Endothelial cell of umbilical vein (primary cell): ENCODE measurements at regions of chr7 and their contacts with region 1.

Region 1: DNA sequence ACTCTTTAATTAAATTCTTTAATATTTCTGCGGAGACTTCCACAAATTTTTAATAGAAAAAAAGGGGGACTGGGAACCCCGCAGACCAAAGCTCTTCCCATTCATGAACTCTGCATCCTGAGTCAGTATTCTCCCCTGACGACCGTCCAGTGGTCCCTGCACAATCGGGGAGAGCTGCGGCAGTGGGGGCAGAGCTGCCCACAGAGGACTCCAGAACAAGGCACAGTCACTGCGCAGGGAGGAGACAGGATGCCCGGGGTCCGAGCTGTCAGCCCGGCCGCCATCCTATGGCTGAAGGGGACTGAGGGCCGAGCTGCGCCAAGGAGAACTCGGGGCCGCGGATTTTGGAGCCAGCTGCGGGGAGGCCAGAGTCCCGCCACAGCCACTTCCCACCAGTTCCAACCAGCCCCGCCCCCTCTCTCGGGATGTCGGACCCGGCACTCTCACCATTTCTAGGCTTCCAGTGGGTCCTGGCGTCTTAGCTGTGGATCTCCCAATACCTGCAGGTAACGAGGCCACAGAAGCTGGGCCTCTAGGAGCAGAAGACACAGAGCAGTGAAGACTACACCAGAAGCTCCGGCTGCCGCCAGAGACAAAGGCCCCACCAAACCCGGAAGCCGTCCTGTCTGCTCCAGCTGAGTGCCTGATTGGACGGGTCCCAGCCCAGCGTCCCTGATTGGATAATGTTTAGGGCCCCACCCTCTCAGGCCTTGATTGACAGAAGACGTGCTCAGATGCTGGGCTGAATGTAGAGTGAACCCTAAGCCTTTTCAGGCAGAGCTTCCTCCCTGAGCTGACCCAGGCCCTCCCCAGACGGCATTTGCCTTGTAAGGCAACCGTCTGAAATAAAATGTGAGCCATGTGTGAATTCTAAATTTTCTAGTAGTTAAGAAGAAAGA is at the start of gene ERV3-1:
- DNase-seq: peak; percentile 95
- H3K4me3 ChIP-seq: peak within 1 kb of the TSS; percentile 75 to 94 (median 85)
- H3K27ac ChIP-seq: peak within 1 kb of the TSS; percentile 86
- H3K4me1 ChIP-seq: peaks cover 15% of the 10 kb centered on the region
- H3K27me3 ChIP-seq: no peaks in the 10 kb centered on the region
- CTCF ChIP-seq: no peak
- POLR2A ChIP-seq: peak; percentile 94
- total RNA-seq, gene ERV3-1: 28.4 and 44.6 TPM in 2 replicates

Region 2: DNA sequence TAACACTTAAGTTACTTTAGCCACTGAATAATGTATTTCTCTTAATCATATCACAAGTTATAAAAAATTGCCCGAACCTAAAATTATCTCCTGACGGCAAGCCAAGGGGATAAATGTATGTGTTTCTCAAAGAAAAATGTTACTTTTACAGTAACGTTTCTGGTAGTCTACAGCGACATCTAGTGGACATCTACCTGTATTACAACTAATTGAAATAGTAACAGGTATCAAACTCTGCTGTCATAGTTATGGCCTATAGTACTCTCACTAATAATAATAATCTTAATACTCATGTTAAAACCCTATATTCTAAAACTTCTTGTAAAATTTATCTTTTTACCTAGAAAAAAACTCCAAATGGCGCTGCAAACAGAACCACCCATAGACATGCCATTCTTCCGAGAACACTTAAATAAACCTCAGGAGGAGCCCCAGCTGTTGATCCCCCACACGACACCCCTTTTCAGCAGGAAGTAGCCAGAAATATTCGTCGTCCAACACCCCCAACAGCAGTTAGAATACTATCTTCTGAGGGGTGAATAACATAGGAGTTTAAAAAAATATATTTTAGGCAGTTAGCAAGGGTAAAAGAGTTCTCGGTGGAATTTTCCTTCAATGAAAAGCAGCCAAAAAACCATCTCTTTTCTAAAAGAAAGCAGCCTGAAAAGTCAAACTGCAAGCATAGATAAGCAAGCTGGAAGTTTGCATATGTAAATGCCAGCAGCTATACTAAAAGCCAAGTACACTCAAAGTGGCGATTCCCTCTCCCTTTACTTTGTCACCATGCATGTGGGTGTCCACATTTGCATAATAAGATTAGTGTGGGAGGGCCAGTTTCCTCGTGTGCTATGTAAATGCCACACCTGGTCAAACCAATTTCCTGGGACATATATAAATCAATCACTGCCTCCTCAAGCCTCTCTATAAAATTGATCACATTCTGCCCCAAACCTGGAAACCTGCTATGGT is 380.9 kb before region 1 on chr7:
- CTCF ChIA-PET with region 1: no interaction called
- POLR2A ChIA-PET with region 1: no interaction called
- dilution Hi-C with region 1: no loop called
- intact Hi-C with region 1: no loop called
- DNase-seq: no peak
- H3K4me3 ChIP-seq: no peak overlapping the region
- H3K27ac ChIP-seq: no peak overlapping the region
- H3K4me1 ChIP-seq: no peaks in the 10 kb centered on the region
- H3K27me3 ChIP-seq: no peaks in the 10 kb centered on the region
- CTCF ChIP-seq: peak in 1 of 2 donors; percentile 27
- POLR2A ChIP-seq: no peak

Region 3: GRCh38 chr7:64887756-64888508 is 118.4 kb before region 1 on chr7:
- CTCF ChIA-PET with region 1: no interaction called
- POLR2A ChIA-PET with region 1: no interaction called
- dilution Hi-C with region 1: no loop called
- intact Hi-C with region 1: no loop called
- DNase-seq: no peak
- H3K4me3 ChIP-seq: no peak overlapping the region
- H3K27ac ChIP-seq: no peak overlapping the region
- H3K4me1 ChIP-seq: no peaks in the 10 kb centered on the region
- H3K27me3 ChIP-seq: peaks cover 27 to 29% of the 10 kb centered on the region in 2 experiments
- CTCF ChIP-seq: peak in 1 of 2 donors; percentile 42
- POLR2A ChIP-seq: no peak

Region 4: GRCh38 chr7:65037740-65038678 is 31.7 kb after region 1 on chr7:
- CTCF ChIA-PET with region 1: no interaction called
- POLR2A ChIA-PET with region 1: interaction called, 5 read pairs
- dilution Hi-C with region 1: no loop called
- intact Hi-C with region 1: loop called (anchors 1 kb)
- DNase-seq: peak; percentile 92
- H3K4me3 ChIP-seq: peak overlapping the region in 2 of 3 experiments; percentile 3 to 67
- H3K27ac ChIP-seq: peak overlapping the region; percentile 5
- H3K4me1 ChIP-seq: peaks cover 7% of the 10 kb centered on the region
- H3K27me3 ChIP-seq: no peaks in the 10 kb centered on the region
- CTCF ChIP-seq: no peak
- POLR2A ChIP-seq: peak; percentile 43